ENCODE measurements at regions of chr5 and their contacts with region 1.

Region 1: GRCh38 chr5:82351754-82352145 is 73.6 kb upstream of the RPS23 start:
- DNase-seq: no peak
- ATAC-seq: peak; percentile 66 to 79 (median 73)
- H3K4me3 ChIP-seq: no peak overlapping the region
- H3K27ac ChIP-seq: peak overlapping the region; percentile 16 to 70 (median 40)
- H3K4me1 ChIP-seq: peaks cover 0 to 54% (median 27%) of the 10 kb centered on the region in 12 donors
- H3K27me3 ChIP-seq: no peaks in the 10 kb centered on the region
- CTCF ChIP-seq: peak; percentile 68 to 87 (median 80)
- POLR2A ChIP-seq: no peak

Region 2: DNA sequence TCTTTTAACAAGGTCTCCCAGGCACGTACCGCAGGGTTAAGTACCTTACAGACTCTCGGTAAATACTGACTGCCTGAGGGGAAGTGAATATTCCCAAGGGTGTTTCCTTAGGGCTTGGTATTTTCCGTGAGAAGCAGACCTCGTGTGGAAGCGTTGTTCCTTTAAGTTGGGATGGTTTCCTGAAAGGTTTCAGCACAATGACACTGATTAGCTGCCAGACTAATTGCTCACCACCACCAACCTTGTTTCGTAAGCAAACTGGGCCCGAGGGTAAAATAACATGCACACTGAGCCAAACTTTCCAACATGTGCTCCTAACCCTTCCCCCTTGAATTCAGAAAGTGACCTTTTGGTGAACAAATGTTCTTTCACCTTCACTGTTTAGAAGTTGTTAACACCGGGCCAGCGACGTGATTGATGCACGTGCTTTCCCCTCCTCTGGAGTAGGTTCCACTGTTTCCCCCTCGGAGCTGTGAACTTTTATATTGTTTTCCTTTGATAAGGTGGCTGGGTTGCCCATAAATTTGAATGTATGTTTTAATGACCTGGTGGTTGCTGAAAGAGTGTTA is 54.5 kb after region 1 on chr5:
- intact Hi-C with region 1: loop called in 2 of 10 experiments (anchors 10 kb)
- DNase-seq: peak in 2 of 5 donors; percentile 21 to 35
- ATAC-seq: peak; percentile 42 to 92 (median 88)
- H3K4me3 ChIP-seq: no peak overlapping the region
- H3K27ac ChIP-seq: peak overlapping the region in 5 of 12 donors; percentile 25 to 64 (median 40)
- H3K4me1 ChIP-seq: peaks cover 0 to 24% (median 0%) of the 10 kb centered on the region in 12 donors
- H3K27me3 ChIP-seq: no peaks in the 10 kb centered on the region
- CTCF ChIP-seq: no peak
- POLR2A ChIP-seq: no peak

Region 3: GRCh38 chr5:82641331-82642003 is 289.7 kb after region 1 on chr5:
- intact Hi-C with region 1: loop called in 8 of 10 experiments (anchors 5 to 10 kb)
- DNase-seq: peak in 4 of 5 donors; percentile 59 to 70 (median 69)
- ATAC-seq: peak; percentile 80 to 97 (median 95)
- H3K4me3 ChIP-seq: no peak overlapping the region
- H3K27ac ChIP-seq: peak overlapping the region in 3 of 12 donors; percentile 24 to 42 (median 36)
- H3K4me1 ChIP-seq: peaks cover 0 to 24% (median 5%) of the 10 kb centered on the region in 12 donors
- H3K27me3 ChIP-seq: no peaks in the 10 kb centered on the region
- CTCF ChIP-seq: peak; percentile 51 to 86 (median 70)
- POLR2A ChIP-seq: no peak

Region 4: GRCh38 chr5:83076742-83077661 is 725.3 kb after region 1 on chr5 and contains the starts of genes TMEM167A and XRCC4:
- intact Hi-C with region 1: loop called in 2 of 10 experiments (anchors 5 to 10 kb)
- DNase-seq: peak; percentile 97 to 99 (median 97)
- ATAC-seq: peak; percentile 100
- H3K4me3 ChIP-seq: peak within 1 kb of the TSS; percentile 62 to 97 (median 76)
- H3K27ac ChIP-seq: peak within 1 kb of the TSS; percentile 54 to 95 (median 85)
- H3K4me1 ChIP-seq: peaks cover 0 to 61% (median 37%) of the 10 kb centered on the region in 12 donors
- H3K27me3 ChIP-seq: no peaks in the 10 kb centered on the region
- CTCF ChIP-seq: no peak
- POLR2A ChIP-seq: peak in 1 of 2 donors; percentile 87
- total RNA-seq, gene TMEM167A: 21.4 to 62.7 (median 48.4) TPM
- total RNA-seq, gene XRCC4: 3.3 to 50.5 (median 8.0) TPM

Region 5: DNA sequence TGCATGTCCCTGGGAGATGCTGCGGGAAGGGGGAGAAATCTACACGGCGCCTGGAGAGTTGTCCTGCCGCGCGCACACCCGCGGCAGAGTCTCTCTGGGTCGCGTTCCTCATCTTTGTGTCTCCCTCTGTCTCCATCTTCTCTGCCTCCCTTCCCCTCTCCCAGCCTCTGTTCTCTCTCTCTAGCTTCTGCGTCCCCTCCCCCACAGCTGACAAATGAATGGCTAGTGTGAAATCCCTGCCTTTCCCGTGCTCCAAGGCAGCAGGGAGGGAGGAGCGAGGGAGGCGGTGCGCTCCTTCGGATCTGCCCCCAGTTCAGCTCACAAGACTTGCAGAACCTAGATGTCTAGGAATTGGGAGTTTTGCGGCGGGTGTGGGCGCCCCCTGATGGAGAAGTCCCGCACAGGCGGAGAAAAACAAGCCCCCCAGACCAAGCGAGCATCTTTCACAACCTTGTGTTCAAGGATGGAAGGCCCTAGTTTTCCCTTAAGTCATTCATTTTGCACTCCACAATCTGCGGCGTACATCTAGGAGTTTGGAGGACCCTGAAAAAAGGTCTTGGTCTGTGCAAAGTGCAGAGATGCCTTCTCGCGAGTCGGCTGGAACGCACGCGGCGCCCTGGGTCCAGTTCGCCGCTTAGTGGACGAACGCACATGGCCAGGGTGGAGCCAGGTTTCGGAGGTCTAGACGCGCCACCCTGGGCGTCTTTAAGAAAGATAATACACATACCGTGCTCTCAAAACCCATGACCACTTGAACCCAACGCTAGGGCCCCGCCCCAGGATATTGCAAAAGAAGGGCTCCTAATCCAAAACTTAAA is 1121.8 kb after region 1 on chr5:
- intact Hi-C with region 1: loop called in 9 of 10 experiments (anchors 2 to 10 kb)
- DNase-seq: peak; percentile 85 to 92 (median 88)
- ATAC-seq: peak; percentile 78 to 88 (median 83)
- H3K4me3 ChIP-seq: peak overlapping the region; percentile 34 to 69 (median 56)
- H3K27ac ChIP-seq: peak overlapping the region; percentile 14 to 88 (median 72)
- H3K4me1 ChIP-seq: peaks cover 0 to 54% (median 25%) of the 10 kb centered on the region in 12 donors
- H3K27me3 ChIP-seq: peaks cover 0 to 68% (median 36%) of the 10 kb centered on the region in 9 donors
- CTCF ChIP-seq: peak; percentile 70 to 92 (median 84)
- POLR2A ChIP-seq: no peak

Region 6: GRCh38 chr5:83564069-83564749 is 1212.5 kb after region 1 on chr5:
- intact Hi-C with region 1: loop called (anchors 2 to 5 kb)
- DNase-seq: no peak
- ATAC-seq: peak in 3 of 4 donors; percentile 58 to 68 (median 66)
- H3K4me3 ChIP-seq: no peak overlapping the region
- H3K27ac ChIP-seq: peak overlapping the region in 3 of 12 donors; percentile 11 to 50 (median 44)
- H3K4me1 ChIP-seq: peaks cover 0 to 23% (median 4%) of the 10 kb centered on the region in 12 donors
- H3K27me3 ChIP-seq: no peaks in the 10 kb centered on the region
- CTCF ChIP-seq: peak; percentile 53 to 78 (median 67)
- POLR2A ChIP-seq: no peak